Posterior cingulate gyrus (tissue), 11 donors: ENCODE measurements at regions of chr6 and their contacts with region 1.

Region 1: GRCh38 chr6:109482905-109483735 is at the start of gene ZBTB24:
- DNase-seq: peak; percentile 76 to 99 (median 88)

Region 2: DNA sequence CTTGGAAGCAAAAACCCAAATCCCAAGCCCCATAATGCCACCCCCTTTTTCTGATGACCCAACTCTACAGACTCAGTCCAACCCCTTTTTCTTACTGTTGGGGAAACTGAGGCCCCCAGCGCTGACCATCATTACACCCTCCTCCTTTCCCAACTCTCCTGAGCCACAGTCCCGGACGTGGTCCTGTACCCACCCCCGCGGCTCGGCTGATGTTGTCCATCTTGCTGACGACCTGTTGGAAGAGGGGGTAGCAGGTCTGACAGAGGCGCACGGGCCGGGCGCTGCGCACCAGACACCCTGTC is 1409.1 kb before region 1 on chr6:
- intact Hi-C with region 1: no loop called
- DNase-seq: peak in 2 of 10 donors; percentile 11 to 76

Region 3: GRCh38 chr6:108742041-108742440 is 741.1 kb before region 1 on chr6:
- intact Hi-C with region 1: no loop called
- DNase-seq: no peak

Region 4: DNA sequence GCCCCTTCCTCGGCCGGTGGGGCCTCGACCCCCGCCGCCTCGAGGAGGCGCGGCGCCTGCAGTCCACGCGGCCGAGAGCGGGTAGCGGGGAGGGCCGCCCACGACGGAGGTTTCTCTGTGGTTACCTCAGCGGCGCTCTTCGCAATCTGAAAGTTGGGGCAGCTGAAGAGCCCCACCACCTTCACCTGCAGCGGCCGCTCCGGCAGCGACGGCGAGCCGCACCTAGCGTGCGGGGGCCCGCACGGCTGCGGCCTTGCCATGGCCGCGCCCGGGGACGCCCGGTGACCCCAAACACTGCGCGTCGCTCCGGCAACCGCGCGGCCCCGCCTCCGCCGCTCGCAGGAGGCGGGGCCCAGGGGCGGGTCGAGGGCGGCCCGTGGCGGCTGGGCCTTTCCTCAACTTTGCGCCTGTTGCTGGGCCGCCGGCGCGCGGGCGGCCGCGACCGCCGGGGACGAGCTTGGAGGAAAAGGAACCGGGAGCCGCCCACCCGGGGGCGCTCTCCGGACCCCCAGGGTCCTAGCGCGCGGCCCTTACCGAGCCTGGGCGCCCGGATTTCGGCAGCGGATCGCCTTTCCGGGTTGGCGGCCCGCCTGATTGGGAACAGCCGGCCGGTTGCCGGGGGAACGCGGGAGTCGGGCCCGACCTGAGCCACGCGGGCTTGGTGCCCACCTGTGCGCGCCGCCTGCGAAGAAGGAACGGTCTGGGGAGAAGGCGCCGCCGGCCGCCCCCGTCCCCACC is 42.6 kb before region 1 on chr6 and contains the starts of genes PPIL6 and SMPD2:
- intact Hi-C with region 1: loop called (anchors 2 kb)
- DNase-seq: peak; percentile 70 to 97 (median 81)